Pancreas (tissue), 10 donors: ENCODE measurements at regions of chr9 and their contacts with region 1.

Region 1: GRCh38 chr9:101235105-101235866 is 149.5 kb downstream of the BAAT start:
- DNase-seq: no peak
- ATAC-seq: peak in 3 of 4 donors; percentile 77 to 81 (median 78)
- H3K4me3 ChIP-seq: no peak overlapping the region
- H3K27ac ChIP-seq: no peak overlapping the region
- H3K4me1 ChIP-seq: no peaks in the 10 kb centered on the region
- H3K27me3 ChIP-seq: no peaks in the 10 kb centered on the region
- CTCF ChIP-seq: peak in 3 of 4 donors; percentile 13 to 29 (median 24)

Region 2: DNA sequence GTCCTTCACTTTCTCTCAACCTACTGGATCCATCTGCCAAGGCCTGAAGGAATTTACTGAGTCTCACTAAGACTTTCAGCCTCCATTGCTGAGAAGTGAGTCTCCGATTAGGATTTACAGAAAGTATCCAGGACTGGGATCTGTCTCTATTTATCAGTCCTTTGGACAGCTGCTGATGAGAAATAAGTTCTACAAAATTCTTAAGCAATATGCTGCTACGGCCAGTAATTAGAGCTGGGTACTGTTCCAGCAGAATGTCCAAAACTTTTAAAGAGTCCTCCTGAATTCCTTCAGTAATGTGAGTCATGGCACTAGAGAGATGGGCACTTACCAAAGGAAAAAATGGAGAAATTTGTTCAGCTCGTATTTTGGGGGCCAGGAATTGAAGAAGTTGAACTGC is 888.5 kb before region 1 on chr9:
- intact Hi-C with region 1: no loop called
- DNase-seq: no peak
- ATAC-seq: no peak
- H3K4me3 ChIP-seq: no peak overlapping the region
- H3K27ac ChIP-seq: no peak overlapping the region
- H3K4me1 ChIP-seq: peaks cover 0 to 8% (median 5%) of the 10 kb centered on the region in 3 donors
- H3K27me3 ChIP-seq: no peaks in the 10 kb centered on the region
- CTCF ChIP-seq: no peak

Region 3: GRCh38 chr9:100714372-100715099 is 520.8 kb before region 1 on chr9:
- intact Hi-C with region 1: loop called in 1 of 3 experiments (anchors 10 kb)
- DNase-seq: peak; percentile 37 to 77 (median 60)
- ATAC-seq: peak; percentile 60 to 94 (median 89)
- H3K4me3 ChIP-seq: no peak overlapping the region
- H3K27ac ChIP-seq: no peak overlapping the region
- H3K4me1 ChIP-seq: no peaks in the 10 kb centered on the region
- H3K27me3 ChIP-seq: no peaks in the 10 kb centered on the region
- CTCF ChIP-seq: peak; percentile 71 to 95 (median 88)

Region 4: DNA sequence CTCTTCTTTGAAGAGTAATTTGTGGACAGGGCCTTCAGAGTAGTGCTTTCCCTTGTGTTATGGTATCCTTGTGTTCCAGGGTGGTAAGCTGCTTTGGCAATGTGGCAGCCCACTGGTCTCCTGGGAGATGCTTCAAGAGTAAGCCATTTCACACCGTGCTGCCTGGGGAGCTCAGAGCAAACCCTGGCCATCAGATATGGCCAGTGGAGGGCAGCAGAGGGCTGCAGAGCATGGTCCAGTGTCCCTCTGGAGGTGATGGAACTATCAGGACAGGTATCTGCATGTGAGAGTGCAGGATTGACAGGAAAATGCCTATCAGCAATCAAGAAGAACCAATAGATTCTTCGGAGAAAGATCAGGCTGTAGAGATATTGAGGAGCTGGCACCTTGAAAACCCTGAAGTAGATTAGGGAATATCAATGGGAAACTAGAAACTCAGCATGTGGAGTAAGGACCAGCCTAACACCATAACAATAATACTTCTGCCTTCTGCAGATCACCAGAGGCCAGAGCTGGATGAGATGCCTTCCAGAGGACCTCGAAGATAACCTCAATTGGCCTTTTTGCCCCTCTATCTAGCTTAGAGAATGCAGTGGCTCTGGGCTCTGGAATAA is 116.0 kb before region 1 on chr9:
- intact Hi-C with region 1: loop called in 2 of 3 experiments (anchors 10 kb)
- DNase-seq: peak; percentile 26 to 84 (median 68)
- ATAC-seq: peak; percentile 84 to 100 (median 98)
- H3K4me3 ChIP-seq: no peak overlapping the region
- H3K27ac ChIP-seq: no peak overlapping the region
- H3K4me1 ChIP-seq: no peaks in the 10 kb centered on the region
- H3K27me3 ChIP-seq: no peaks in the 10 kb centered on the region
- CTCF ChIP-seq: peak; percentile 44 to 79 (median 66)